ENCODE measurements at regions of chr22 and their contacts with region 1.

Region 1: DNA sequence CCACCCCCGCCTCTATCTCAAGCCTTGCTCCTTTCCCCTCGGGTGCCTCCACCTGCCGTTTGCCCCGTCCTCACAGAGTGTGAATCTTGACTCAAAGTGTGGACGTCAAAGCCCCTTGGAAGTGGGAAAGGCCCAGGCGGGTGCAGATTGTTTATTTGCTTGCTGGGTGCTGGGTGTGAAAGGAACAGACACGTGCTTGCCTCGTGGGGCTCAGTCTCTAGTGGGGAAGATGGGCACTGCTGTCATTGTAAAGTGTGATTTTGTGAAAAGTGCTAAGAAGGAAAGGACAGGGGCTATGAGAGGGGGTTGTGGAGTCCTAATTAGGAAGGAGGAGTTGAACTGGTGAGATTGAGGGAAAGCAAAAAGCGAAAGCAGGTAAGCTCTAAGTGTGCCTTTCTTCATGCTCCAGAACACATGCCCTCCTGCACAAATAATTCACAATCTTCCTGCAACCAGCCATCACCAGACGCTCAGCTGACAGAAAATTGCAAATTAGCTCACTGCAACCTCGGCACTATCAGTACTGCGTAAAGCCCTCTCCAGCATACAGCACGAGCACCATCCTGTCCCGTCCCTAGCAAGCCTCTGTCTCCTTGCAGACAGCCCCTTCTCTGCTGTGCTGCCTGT is 9.7 kb upstream of the GCAT start:
- DNase-seq: no peak
- H3K4me3 ChIP-seq: no peak overlapping the region
- H3K27ac ChIP-seq: no peak overlapping the region
- H3K4me1 ChIP-seq: no peaks in the 10 kb centered on the region
- H3K27me3 ChIP-seq: no peaks in the 10 kb centered on the region
- CTCF ChIP-seq: no peak
- POLR2A ChIP-seq: no peak

Region 2: DNA sequence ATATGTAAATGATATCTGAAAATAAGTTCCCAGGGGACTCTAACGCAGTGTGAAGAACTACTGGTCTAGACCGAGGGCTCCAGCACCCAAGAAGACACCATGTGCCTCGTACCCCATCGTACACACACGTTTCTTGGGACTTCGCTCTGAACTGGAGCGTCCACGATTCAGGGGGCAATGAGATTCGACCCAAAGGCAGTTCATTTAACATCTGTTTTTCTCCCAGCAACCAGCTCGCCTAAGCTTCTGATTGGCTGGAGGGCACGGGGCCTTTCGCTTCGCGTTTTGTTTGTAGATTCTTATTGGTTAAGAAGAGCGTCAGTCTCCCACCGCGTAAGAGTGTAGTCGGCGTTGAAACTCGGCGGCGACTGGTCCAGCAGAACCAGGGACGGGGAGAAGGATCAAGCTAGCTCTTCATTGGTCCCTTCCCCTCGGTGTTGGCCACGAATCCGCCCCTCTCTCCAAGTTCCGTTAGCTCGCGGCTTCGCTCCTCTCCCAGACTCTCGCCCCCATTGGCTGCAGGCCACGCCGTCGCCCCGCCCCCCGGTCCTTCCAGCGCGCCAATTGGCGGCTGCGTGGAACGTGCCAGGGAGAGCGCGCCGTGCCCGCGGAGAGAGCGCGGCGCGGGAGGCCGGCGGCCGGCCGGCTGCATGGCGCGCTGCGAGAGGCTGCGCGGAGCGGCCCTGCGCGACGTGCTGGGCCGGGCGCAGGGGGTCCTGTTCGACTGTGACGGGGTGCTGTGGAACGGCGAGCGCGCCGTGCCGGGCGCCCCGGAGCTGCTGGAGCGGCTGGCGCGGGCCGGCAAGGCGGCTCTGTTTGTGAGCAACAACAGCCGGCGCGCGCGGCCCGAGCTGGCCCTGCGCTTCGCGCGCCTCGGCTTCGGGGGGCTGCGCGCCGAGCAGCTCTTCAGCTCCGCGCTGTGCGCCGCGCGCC is 139.6 kb before region 1 on chr22 and contains the start of gene PDXP:
- intact Hi-C with region 1: loop called (anchors 10 kb)
- DNase-seq: peak; percentile 99
- H3K4me3 ChIP-seq: peak within 1 kb of the TSS; percentile 46 to 97 (median 71)
- H3K27ac ChIP-seq: peak within 1 kb of the TSS; percentile 76 to 79
- H3K4me1 ChIP-seq: peaks cover 4 to 17% of the 10 kb centered on the region in 2 donors
- H3K27me3 ChIP-seq: no peaks in the 10 kb centered on the region
- CTCF ChIP-seq: no peak
- POLR2A ChIP-seq: no peak
- total RNA-seq, gene PDXP: 4.2 to 6.9 (median 4.2) TPM

Region 3: GRCh38 chr22:37768273-37768672 is 29.7 kb before region 1 on chr22:
- intact Hi-C with region 1: loop called (anchors 1 kb)
- DNase-seq: no peak
- H3K4me3 ChIP-seq: no peak overlapping the region
- H3K27ac ChIP-seq: no peak overlapping the region
- H3K4me1 ChIP-seq: no peaks in the 10 kb centered on the region
- H3K27me3 ChIP-seq: no peaks in the 10 kb centered on the region
- CTCF ChIP-seq: no peak
- POLR2A ChIP-seq: no peak

Measured in breast epithelium (tissue), 4 donors.